Motor neuron (in vitro differentiated cells): ENCODE measurements at regions of chr5 and their contacts with region 1.

Region 1: GRCh38 chr5:41275813-41276512 is 62.6 kb upstream of the C6 start:
- ATAC-seq: no peak
- H3K4me3 ChIP-seq: no peak overlapping the region
- H3K27ac ChIP-seq: no peak overlapping the region
- H3K4me1 ChIP-seq: no peaks in the 10 kb centered on the region

Region 2: GRCh38 chr5:41219658-41220269 is 56.2 kb before region 1 on chr5:
- in situ Hi-C with region 1: no loop called
- ATAC-seq: no peak
- H3K4me3 ChIP-seq: no peak overlapping the region
- H3K27ac ChIP-seq: no peak overlapping the region
- H3K4me1 ChIP-seq: no peaks in the 10 kb centered on the region

Region 3: DNA sequence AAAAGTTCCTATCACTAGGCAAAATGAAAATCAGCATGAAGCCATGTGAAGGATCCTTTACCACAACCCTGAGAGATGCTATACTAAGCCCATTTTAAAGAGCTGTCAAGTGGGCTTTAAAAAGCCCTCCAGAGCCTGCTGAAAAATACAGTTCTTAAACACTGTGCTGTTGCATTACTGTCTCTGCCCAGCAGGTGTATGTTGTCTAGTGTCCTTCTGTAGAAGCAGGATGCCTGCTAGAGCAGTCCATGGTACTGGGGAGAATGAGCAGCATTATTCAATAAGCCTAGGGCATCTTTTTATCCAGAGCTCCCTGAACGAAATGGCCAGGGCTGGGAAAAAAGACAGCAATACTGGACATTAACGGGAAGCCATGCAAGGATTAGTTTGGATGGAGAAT is 360.6 kb after region 1 on chr5:
- in situ Hi-C with region 1: loop called in 1 of 9 experiments (anchors 25 kb)
- ATAC-seq: peak in 3 of 8 experiments; percentile 57 to 87 (median 63)
- H3K4me3 ChIP-seq: no peak overlapping the region
- H3K27ac ChIP-seq: no peak overlapping the region
- H3K4me1 ChIP-seq: no peaks in the 10 kb centered on the region